Posterior vena cava (tissue), 2 donors: ENCODE measurements at regions of chr16 and their contacts with region 1.

Region 1: DNA sequence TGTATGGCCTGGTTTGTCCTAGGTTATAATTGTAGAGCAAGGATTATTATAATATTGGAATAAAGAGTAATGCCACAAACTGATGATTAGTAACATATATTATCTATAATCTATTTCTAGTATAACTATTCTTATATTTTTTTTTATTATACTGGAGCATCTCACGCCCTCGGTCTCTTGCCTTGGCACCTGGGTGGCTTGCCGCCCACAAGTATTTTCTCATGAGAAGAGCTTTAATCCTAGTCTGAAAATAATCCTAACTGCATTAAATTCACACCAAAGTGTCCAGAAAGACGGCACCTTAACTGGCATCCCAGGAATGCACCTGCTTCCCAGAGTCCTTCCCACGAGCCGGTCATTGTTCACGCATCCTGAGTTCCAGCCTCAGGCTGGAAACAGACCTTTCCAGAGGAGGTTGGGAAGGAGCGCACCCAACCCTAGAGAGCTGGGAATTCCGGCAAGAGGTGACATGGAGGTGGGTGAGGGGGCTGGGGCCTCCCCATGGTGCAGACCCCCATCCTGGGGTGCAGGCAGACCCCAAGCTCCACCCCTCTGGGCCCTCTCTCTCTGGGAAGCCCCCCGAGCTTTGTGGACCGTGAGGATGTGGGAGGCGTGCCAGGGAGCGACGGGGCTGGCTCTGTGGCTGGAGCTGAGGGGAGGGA is 15.9 kb downstream of the CHMP1A start:
- DNase-seq: no peak

Region 2: GRCh38 chr16:88706288-88706964 is 935.2 kb before region 1 on chr16 and contains the starts of genes CTU2 and RNF166:
- intact Hi-C with region 1: loop called in 1 of 2 experiments (anchors 10 kb)
- DNase-seq: peak; percentile 98
- total RNA-seq, gene CTU2: 17.2 to 20.4 TPM
- total RNA-seq, gene RNF166: 16.8 to 19.0 TPM

Region 3: GRCh38 chr16:89330177-89330856 is 311.3 kb before region 1 on chr16:
- intact Hi-C with region 1: loop called in 1 of 2 experiments (anchors 10 kb)
- DNase-seq: peak; percentile 78

Region 4: DNA sequence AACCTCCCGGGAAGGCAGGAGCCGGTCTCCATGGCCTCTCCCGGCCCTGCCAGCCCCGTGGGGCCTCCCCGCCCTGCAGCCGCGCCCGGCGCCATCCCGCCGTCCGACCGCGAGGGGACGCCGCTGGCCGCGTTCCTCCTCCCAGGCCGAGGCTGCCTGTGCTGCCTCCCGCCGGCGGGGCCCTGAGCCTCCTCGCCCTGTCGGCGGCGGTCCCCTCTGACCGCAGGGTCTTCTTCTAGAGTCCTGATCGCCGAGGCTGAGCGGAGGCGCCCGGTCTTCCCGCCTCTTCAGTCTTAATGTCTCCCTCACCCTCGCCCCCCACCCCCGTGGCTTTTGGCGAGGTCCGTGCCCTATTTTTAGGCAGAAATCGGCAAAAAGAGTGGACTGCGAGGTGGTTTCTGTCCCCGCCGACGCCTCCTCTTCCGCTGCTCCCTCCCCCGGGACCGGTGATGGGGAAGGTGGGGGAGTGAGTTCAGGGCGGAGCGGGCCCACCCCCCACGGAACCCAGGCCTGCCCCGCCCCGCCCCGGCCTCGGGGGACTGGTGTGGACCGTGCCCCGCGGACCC is 66.8 kb before region 1 on chr16:
- intact Hi-C with region 1: loop called (anchors 5 to 10 kb)
- DNase-seq: peak; percentile 88

Region 5: DNA sequence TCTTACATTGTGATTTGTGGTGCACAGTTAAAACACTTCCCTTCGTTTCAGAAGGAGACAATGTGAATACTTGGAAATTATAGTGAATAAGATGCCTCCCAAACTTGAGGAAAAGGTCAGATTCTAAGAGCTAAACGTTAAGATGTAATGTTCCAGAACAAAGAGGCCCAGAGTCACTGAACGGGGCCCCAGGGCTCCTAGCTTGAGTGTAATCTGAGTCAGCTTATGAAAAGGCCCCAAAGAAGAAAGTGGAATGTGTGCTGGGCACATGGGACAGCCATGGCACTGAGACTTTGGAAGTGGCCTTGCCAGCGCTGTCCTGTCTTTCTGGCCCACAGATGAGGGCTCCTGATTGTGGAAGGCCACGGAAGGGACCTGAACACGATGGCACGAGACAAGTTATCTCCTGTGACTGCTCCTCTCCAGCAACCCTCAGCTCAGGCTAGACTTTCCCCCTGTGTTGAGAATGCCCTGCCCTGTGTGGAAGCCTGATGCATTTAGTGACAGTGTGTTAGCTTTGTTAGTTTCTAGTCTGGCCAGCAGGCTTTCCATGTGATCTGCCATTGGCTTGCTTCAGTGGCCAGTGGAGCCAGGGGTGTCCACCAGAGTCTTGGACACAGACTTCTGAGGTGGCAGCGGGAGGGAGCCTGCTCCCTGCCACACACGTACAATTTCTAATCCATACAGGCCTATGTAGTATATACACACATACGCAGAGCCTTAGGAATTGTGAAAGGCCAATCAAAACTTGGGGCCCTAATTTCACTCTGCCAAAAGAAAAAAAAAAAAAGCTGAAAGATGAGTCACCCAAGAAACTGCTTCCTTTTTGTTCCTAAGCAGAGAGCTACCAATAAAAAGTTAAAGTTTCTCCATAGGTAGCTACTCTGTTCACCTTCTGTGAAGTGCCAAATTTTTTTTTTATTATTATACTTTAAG is 29.2 kb after region 1 on chr16:
- intact Hi-C with region 1: no loop called
- DNase-seq: no peak

Region 6: DNA sequence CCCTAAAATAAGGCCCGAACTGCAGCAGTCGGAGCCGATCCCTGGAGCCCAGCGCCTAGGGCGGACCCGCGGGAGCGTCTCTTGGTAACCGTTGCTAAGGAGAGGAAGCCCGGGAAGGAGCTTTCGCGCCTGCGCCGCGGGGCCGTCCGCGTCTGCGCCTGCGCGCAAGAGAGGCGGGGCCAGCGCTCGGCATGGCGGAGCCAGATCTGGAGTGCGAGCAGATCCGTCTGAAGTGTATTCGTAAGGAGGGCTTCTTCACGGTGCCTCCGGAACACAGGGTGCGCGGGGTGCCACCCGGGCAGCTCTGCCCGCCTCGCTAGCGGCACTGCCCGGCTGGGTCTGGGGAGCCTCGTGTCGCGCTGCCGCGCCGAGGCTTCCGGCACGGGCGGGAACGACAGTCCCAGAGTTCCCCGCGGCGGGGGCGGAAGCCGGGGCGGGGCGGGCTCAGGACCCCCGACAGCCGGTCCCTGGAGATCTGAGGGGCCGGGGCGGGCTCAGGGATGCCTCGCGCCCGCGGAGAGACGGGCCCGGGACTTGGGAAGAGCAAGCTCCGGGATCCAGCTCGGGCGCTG is 45.0 kb after region 1 on chr16 and contains the start of gene CDK10:
- intact Hi-C with region 1: no loop called
- DNase-seq: peak; percentile 97
- total RNA-seq, gene CDK10: 33.7 to 37.5 TPM

Region 7: GRCh38 chr16:89969741-89970410 is 328.3 kb after region 1 on chr16:
- intact Hi-C with region 1: no loop called
- DNase-seq: no peak